ENCODE measurements at regions of chr5 and their contacts with region 1.

Region 1: DNA sequence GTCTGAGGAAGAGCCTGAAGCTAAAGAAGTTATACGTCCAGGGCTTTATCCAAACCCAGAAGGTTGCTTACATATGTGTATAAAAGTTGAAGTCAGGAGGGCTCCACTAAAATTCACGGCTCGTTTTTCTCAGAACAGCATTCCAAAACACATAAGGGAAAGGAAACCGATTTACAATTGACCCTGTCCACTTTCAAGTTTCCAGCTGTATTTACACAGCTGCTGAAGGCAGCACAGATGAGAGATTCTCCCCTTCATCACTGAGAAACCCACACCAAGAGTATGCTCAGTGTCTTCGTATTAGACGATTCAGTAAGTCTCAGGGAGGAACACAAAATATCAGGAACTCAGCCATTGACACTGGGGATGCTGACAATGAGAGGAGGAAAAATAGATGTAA is 5.9 kb upstream of the NREP start:
- DNase-seq: no peak
- ATAC-seq: peak in 2 of 4 donors; percentile 42 to 48
- H3K4me3 ChIP-seq: no peak overlapping the region
- H3K27ac ChIP-seq: peak overlapping the region in 4 of 12 donors; percentile 11 to 57 (median 42)
- H3K4me1 ChIP-seq: peaks cover 0 to 9% (median 5%) of the 10 kb centered on the region in 12 donors
- H3K27me3 ChIP-seq: no peaks in the 10 kb centered on the region
- CTCF ChIP-seq: no peak
- POLR2A ChIP-seq: no peak

Region 2: DNA sequence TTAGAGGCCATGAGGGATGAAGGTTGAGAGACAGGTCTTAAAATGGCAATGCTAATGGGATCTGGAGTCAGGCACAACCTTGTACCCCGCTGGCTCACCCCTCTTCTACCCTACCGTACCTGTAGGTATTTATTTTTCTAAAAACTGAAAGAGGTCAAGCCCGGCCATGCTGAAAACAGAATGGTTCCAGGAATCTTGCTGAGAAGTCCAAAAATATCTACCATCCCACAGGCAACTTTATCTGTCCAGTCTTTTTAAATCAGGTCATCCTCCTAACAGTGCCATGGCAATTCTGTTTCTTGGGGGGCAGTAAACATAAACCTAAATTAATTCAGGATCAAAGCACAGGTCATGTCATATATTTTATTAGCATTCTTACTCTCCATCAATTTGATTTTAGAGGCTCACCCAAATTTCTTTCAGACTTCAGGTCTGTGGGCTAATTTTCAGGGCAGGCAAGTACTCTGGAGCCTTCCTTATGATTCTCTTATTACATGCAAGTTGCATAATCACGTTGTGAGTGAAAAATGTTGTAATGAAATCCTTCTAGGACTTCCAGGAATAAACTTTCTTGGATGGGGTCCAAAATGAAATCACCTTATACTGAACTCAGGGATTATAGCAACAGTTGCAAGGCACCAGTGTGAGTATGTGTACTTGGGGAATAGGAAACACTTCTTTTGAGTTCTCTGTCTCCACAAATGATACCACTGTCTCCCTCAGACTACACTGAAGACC is 96.8 kb after region 1 on chr5:
- intact Hi-C with region 1: loop called in 2 of 10 experiments (anchors 5 to 10 kb)
- DNase-seq: no peak
- ATAC-seq: peak; percentile 34 to 76 (median 70)
- H3K4me3 ChIP-seq: no peak overlapping the region
- H3K27ac ChIP-seq: peak overlapping the region in 5 of 12 donors; percentile 13 to 52 (median 46)
- H3K4me1 ChIP-seq: peaks cover 0 to 43% (median 14%) of the 10 kb centered on the region in 12 donors
- H3K27me3 ChIP-seq: no peaks in the 10 kb centered on the region
- CTCF ChIP-seq: no peak
- POLR2A ChIP-seq: no peak

Region 3: GRCh38 chr5:111997711-111998110 is 234.8 kb after region 1 on chr5:
- intact Hi-C with region 1: loop called in 1 of 10 experiments (anchors 10 kb)
- DNase-seq: peak in 2 of 5 donors; percentile 13 to 52
- ATAC-seq: peak; percentile 41 to 96 (median 62)
- H3K4me3 ChIP-seq: no peak overlapping the region
- H3K27ac ChIP-seq: no peak overlapping the region
- H3K4me1 ChIP-seq: no peaks in the 10 kb centered on the region
- H3K27me3 ChIP-seq: no peaks in the 10 kb centered on the region
- CTCF ChIP-seq: no peak
- POLR2A ChIP-seq: no peak

Region 4: GRCh38 chr5:112125903-112126302 is 363.0 kb after region 1 on chr5:
- intact Hi-C with region 1: loop called in 1 of 10 experiments (anchors 10 kb)
- DNase-seq: no peak
- ATAC-seq: no peak
- H3K4me3 ChIP-seq: no peak overlapping the region
- H3K27ac ChIP-seq: no peak overlapping the region
- H3K4me1 ChIP-seq: no peaks in the 10 kb centered on the region
- H3K27me3 ChIP-seq: no peaks in the 10 kb centered on the region
- CTCF ChIP-seq: no peak
- POLR2A ChIP-seq: no peak